K562 (cell line): ENCODE measurements at regions of chr1 and their contacts with region 1.

Region 1: GRCh38 chr1:110319332-110320152 is 19.6 kb upstream of the RBM15 start:
- DNase-seq: no peak
- ATAC-seq: peak; percentile 31
- H3K4me3 ChIP-seq: no peak overlapping the region
- H3K27ac ChIP-seq: no peak overlapping the region
- H3K4me1 ChIP-seq: no peaks in the 10 kb centered on the region
- H3K27me3 ChIP-seq: no peaks in the 10 kb centered on the region; a peak in 1 of 5 replicates
- CTCF ChIP-seq: no peak
- EP300 ChIP-seq: no peak
- POLR2A ChIP-seq: no peak
- RAD21 ChIP-seq: no peak

Region 2: GRCh38 chr1:110455151-110455550 is 135.6 kb after region 1 on chr1:
- CTCF ChIA-PET with region 1: no interaction called
- POLR2A ChIA-PET with region 1: no interaction called
- in situ Hi-C with region 1: no loop called
- intact Hi-C with region 1: loop called (anchors 5 kb)
- DNase-seq: peak; percentile 44 to 72 (median 58)
- ATAC-seq: peak; percentile 89
- H3K4me3 ChIP-seq: no peak overlapping the region
- H3K27ac ChIP-seq: no peak overlapping the region
- H3K4me1 ChIP-seq: peaks cover 0 to 4% of the 10 kb centered on the region in 2 experiments; a peak in 2 of 5 replicates
- H3K27me3 ChIP-seq: peaks cover 32 to 61% of the 10 kb centered on the region in 2 experiments
- CTCF ChIP-seq: peak; percentile 82 to 94 (median 91)
- EP300 ChIP-seq: no peak
- POLR2A ChIP-seq: no peak
- RAD21 ChIP-seq: peak; percentile 96 to 97

Region 3: GRCh38 chr1:110686188-110686587 is 366.6 kb after region 1 on chr1:
- CTCF ChIA-PET with region 1: no interaction called
- POLR2A ChIA-PET with region 1: no interaction called
- in situ Hi-C with region 1: no loop called
- intact Hi-C with region 1: no loop called
- DNase-seq: peak in 1 of 4 experiments; percentile 4
- ATAC-seq: peak; percentile 68
- H3K4me3 ChIP-seq: no peak overlapping the region
- H3K27ac ChIP-seq: no peak overlapping the region
- H3K4me1 ChIP-seq: no peaks in the 10 kb centered on the region
- H3K27me3 ChIP-seq: no peaks in the 10 kb centered on the region; a peak in 1 of 5 replicates
- CTCF ChIP-seq: peak; percentile 13 to 44 (median 15); a peak in 2 of 6 replicates
- EP300 ChIP-seq: no peak
- POLR2A ChIP-seq: no peak
- RAD21 ChIP-seq: no peak